Dorsolateral prefrontal cortex (tissue), 120 donors: ENCODE measurements at regions of chr19 and their contacts with region 1.

Region 1: DNA sequence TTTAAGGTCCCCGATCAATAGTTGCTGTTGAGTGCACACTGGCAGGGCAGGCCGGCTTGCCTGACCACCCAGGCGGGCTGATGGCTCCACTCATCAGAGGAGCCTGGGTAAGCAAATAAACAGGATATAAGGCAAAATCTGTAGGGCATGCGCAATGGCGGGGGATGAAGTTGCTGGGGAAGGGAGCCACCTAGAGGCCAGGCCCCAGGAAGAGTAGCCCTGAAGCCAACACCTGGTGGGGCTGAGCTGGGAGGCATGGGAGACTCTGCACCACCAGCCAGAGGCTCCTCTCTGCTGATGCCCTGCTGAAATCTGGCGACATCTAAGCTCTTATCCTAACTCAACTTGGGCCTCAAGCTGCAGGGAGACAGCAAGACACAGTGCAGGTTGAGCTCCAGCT is 324.3 kb downstream of the ZNF536 start:
- DNase-seq: no peak
- H3K4me3 ChIP-seq: no peak overlapping the region
- H3K27ac ChIP-seq: no peak overlapping the region
- H3K27me3 ChIP-seq: no peaks in the 10 kb centered on the region
- CTCF ChIP-seq: peak in 26 of 56 donors; percentile 10 to 40 (median 22)

Region 2: GRCh38 chr19:30742406-30742938 is 46.0 kb after region 1 on chr19:
- intact Hi-C with region 1: no loop called
- DNase-seq: no peak
- H3K4me3 ChIP-seq: no peak overlapping the region
- H3K27ac ChIP-seq: no peak overlapping the region
- H3K27me3 ChIP-seq: peaks cover 0 to 22% (median 0%) of the 10 kb centered on the region in 45 donors
- CTCF ChIP-seq: no peak

Region 3: GRCh38 chr19:31349160-31349881 is 652.8 kb after region 1 on chr19 and contains the start of gene TSHZ3:
- intact Hi-C with region 1: loop called in 1 of 2 experiments (anchors 10 kb)
- DNase-seq: peak in 5 of 10 donors; percentile 24 to 67 (median 65)
- H3K4me3 ChIP-seq: peak within 1 kb of the TSS; percentile 58 to 97 (median 82)
- H3K27ac ChIP-seq: peak within 1 kb of the TSS in 55 of 59 donors; percentile 11 to 90 (median 78)
- H3K27me3 ChIP-seq: peaks cover 0 to 21% (median 3%) of the 10 kb centered on the region in 45 donors
- CTCF ChIP-seq: no peak
- total RNA-seq, gene TSHZ3: 8.4 to 35.0 (median 22.7) TPM